Posterior cingulate gyrus (tissue), 11 donors: ENCODE measurements at regions of chr11 and their contacts with region 1.

Region 1: GRCh38 chr11:47373876-47374720 is 4.2 kb downstream of the SPI1 start:
- DNase-seq: peak; percentile 57 to 98 (median 80)

Region 2: GRCh38 chr11:47233989-47234668 is 140.0 kb before region 1 on chr11:
- intact Hi-C with region 1: no loop called
- DNase-seq: peak in 2 of 10 donors; percentile 46 to 78

Region 3: DNA sequence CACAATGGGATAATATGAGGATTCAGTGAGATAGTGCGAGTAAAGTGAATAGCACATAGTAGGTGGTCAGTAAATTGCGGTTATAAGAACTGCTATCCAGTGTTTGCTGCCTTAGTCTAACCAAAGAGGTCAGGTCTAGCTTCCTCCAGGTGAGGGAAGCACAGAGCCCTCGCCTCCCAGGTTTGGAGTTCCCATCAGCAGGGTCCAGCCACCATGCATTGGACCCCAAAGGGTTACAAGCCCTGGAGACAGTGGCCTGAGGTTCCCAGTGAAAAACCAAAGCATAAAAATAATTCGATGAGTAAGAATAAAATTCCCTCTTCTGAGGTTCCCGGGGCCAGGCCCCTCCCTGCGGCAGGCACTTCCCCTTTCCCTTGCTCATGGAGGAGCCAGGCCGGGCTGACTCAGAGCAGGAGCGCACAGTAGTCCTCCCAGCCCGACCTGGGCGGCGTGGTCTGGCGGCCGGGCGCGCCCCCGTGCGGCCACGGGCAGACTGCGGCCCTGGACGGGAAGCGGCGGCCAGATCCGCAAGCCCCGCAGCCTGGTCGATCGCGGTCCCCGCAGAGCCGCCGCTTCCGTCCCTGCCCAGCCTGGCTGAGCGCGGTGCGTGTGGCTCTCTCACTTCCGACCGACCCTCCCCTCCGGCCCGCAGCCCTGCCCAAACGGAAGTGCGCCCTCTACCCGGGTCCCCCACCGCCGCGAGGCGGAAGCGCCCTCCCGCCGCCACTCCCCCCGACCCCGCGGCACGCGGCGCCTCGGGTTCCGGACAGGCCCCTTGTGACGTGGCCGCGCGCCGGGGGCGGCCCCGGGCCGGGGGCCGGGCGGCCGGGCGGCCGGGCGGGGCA is 33.9 kb after region 1 on chr11 and contains the start of gene SLC39A13:
- intact Hi-C with region 1: loop called (anchors 2 kb)
- DNase-seq: peak; percentile 86 to 99 (median 92)

Region 4: GRCh38 chr11:47454180-47454644 is 80.1 kb after region 1 on chr11:
- intact Hi-C with region 1: loop called (anchors 5 kb)
- DNase-seq: peak in 9 of 10 donors; percentile 32 to 92 (median 63)

Region 5: DNA sequence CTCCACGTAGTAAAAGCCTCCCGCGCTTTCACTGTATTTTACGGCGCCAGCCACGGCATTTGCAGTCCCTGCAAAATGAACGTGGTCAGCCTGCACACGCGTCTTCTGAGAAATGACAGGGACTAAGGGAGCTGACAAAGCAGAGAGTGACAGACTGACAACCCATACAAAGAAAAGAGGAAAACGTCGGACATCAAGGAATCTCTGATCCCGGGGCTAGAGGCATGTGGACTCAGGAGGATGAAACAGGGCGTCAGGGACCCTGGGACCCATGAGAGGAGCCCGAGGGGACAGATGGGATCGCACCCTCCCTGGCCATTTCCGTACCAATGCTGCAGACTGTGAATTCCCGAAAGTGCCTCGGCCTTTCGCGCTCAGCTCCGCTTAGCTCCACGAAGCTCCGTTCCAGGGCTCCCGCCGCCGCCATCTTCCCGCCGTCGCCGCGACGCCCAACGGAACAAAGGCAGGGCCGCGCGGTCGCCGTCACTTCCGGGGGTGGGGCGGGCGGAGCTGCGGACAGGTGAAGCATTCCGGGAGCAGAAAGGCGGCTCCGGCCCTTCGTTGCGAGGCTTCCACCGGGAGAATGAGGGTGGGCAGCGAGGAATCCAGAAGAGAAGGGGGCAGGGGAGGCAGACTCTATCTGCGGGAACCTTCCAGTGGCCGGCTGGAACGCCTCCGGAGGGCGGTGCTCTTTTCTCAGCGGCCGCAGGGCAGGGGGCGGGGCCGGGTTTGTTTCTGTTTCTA is 474.0 kb after region 1 on chr11 and contains the start of gene NUP160:
- intact Hi-C with region 1: loop called (anchors 5 kb)
- DNase-seq: peak; percentile 80 to 98 (median 88)